CD8-positive, alpha-beta T cell (primary cell): ENCODE measurements at regions of chr1 and their contacts with region 1.

Region 1: DNA sequence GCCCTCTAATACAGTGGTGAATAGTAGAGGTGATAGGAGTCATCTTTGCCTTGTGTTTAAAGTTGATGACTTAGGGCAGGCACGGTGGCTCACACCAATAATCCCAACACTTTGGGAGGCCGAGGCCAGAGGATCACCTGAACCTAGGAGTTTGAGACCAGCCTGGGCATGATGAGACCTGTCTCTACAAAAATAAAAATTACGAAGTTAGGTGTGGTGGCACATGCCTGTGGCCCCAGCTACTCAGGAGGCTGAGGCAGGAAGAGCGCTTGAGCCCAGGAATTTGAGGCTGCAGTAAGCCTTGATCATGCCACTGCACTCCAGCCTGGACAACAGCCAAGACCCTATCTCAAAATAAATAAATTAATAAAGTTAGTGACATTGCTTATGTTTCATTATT is 26.6 kb downstream of the CAPZA1 start:
- DNase-seq: no peak
- ATAC-seq: no peak
- H3K4me3 ChIP-seq: no peak overlapping the region
- H3K4me3 Mint-ChIP-seq: no peak overlapping the region
- H3K27ac ChIP-seq: no peak overlapping the region
- H3K27ac Mint-ChIP-seq: peak overlapping the region; percentile 64
- H3K4me1 ChIP-seq: peaks cover 9% of the 10 kb centered on the region
- H3K4me1 Mint-ChIP-seq: peaks cover 49% of the 10 kb centered on the region
- H3K27me3 ChIP-seq: no peaks in the 10 kb centered on the region
- H3K27me3 Mint-ChIP-seq: no peaks in the 10 kb centered on the region
- CTCF ChIP-seq: no peak

Region 2: GRCh38 chr1:112628516-112628915 is 17.7 kb before region 1 on chr1:
- CTCF ChIA-PET with region 1: no interaction called
- POLR2A ChIA-PET with region 1: interaction called, 3 read pairs
- intact Hi-C with region 1: loop called in 1 of 2 experiments (anchors 2 kb)
- DNase-seq: no peak
- ATAC-seq: no peak
- H3K4me3 ChIP-seq: no peak overlapping the region
- H3K4me3 Mint-ChIP-seq: no peak overlapping the region
- H3K27ac ChIP-seq: no peak overlapping the region
- H3K27ac Mint-ChIP-seq: peak overlapping the region; percentile 29
- H3K4me1 ChIP-seq: peaks cover 53% of the 10 kb centered on the region
- H3K4me1 Mint-ChIP-seq: peaks cover 81% of the 10 kb centered on the region
- H3K27me3 ChIP-seq: no peaks in the 10 kb centered on the region
- H3K27me3 Mint-ChIP-seq: no peaks in the 10 kb centered on the region
- CTCF ChIP-seq: no peak